ENCODE measurements at regions of chr7 and their contacts with region 1.

Region 1: DNA sequence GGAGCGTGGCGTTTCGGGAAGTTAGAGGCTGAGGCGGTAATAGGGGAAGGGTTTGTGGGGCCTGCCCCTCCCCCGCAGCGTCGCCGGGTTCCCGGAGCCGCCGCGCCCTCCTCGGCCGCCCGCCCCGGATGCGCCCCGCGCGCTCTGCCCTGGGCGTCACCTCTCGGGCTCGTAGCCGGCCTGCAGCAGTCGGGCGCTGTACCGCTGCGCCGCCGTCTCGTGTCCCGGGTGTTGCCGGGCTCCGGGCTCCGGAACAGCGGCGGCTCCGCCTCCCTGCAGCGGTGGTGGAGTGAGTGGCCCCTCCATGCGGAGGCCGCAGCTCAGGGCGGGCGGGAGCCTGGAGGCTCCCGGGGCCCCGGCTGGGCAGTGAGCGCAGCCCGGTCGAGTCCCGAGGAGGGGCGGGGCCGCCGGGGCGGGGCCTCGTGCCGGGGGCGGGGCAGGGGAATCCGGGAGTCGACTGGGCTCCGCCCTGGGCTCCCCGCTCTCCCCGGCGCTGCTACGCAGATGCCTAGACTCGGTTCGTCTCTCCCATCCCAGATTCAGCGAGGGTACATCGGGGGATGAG is at the start of gene IMPDH1:
- DNase-seq: peak; percentile 92
- ATAC-seq: peak; percentile 82
- H3K4me3 Mint-ChIP-seq: peak within 1 kb of the TSS; percentile 91
- H3K27ac Mint-ChIP-seq: no peak within 1 kb of the TSS; the same call in 1 of the 2 replicates
- H3K4me1 Mint-ChIP-seq: peaks cover 29% of the 10 kb centered on the region
- H3K27me3 Mint-ChIP-seq: peaks cover 86% of the 10 kb centered on the region
- CTCF ChIP-seq: no peak
- total RNA-seq, gene IMPDH1: 42.8 to 54.2 TPM (median 44.1 TPM) in 3 replicates

Region 2: GRCh38 chr7:128398016-128398840 is 11.4 kb before region 1 on chr7:
- CTCF ChIA-PET with region 1: interaction called, 12 read pairs
- POLR2A ChIA-PET with region 1: no interaction called
- DNase-seq: peak; percentile 84
- ATAC-seq: peak; percentile 90
- H3K4me3 Mint-ChIP-seq: no peak overlapping the region
- H3K27ac Mint-ChIP-seq: no peak overlapping the region
- H3K4me1 Mint-ChIP-seq: no peaks in the 10 kb centered on the region
- H3K27me3 Mint-ChIP-seq: no peaks in the 10 kb centered on the region
- CTCF ChIP-seq: peak; percentile 88

Region 3: DNA sequence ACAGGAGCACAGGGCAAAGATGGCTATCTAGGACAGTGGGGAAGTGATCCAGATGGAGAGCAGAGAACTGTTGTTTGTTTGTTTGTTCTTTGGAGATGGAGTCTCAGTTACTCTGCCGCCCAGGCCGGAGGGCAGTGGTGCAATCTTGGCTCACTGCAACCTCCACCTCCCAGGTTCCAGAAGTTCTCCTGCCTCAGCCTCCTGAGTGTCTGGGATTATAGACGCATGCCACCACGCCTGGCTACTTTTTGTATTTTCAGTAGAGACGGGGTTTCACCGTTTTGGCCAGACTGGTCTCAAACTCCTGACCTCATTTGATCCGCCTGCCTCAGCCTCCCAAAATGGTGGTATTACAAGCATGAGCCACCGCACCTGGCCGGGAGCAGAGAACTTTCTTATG is 87.7 kb after region 1 on chr7:
- CTCF ChIA-PET with region 1: no interaction called
- POLR2A ChIA-PET with region 1: no interaction called
- DNase-seq: no peak
- ATAC-seq: no peak
- H3K4me3 Mint-ChIP-seq: no peak overlapping the region
- H3K27ac Mint-ChIP-seq: no peak overlapping the region
- H3K4me1 Mint-ChIP-seq: no peaks in the 10 kb centered on the region
- H3K27me3 Mint-ChIP-seq: no peaks in the 10 kb centered on the region
- CTCF ChIP-seq: no peak

Region 4: GRCh38 chr7:128920913-128921582 is 511.4 kb after region 1 on chr7:
- CTCF ChIA-PET with region 1: no interaction called
- POLR2A ChIA-PET with region 1: no interaction called
- DNase-seq: no peak
- ATAC-seq: no peak
- H3K4me3 Mint-ChIP-seq: no peak overlapping the region
- H3K27ac Mint-ChIP-seq: no peak overlapping the region
- H3K4me1 Mint-ChIP-seq: peaks cover 12% of the 10 kb centered on the region
- H3K27me3 Mint-ChIP-seq: peaks cover 41% of the 10 kb centered on the region
- CTCF ChIP-seq: no peak